ENCODE measurements at regions of chr3 and their contacts with region 1.

Region 1: DNA sequence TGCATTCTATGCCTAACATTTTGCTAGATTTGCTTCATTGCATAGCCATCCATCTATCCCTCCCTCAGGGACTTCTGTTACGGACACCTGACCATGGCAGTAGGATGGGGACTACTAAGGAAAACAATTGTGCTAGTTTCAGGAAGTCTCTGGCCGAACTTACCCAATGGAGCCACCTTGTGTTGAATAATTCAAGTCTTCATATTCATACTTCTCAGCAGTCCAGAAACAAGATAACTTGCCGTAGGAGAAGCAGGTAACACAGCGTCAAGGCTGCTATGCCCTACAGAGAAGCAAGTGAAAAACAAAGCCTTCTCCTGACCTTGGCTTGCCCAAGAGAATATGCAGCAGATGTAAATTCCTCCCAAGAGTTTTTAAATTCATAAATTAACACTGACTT is 685.3 kb downstream of the GRM7 start:
- DNase-seq: no peak
- H3K4me3 ChIP-seq: no peak overlapping the region
- H3K27ac ChIP-seq: no peak overlapping the region
- H3K4me1 ChIP-seq: no peaks in the 10 kb centered on the region
- H3K27me3 ChIP-seq: no peaks in the 10 kb centered on the region
- CTCF ChIP-seq: peak; percentile 55

Region 2: GRCh38 chr3:7285505-7285904 is 260.7 kb before region 1 on chr3:
- intact Hi-C with region 1: loop called (anchors 10 kb)
- DNase-seq: no peak
- H3K4me3 ChIP-seq: no peak overlapping the region
- H3K27ac ChIP-seq: no peak overlapping the region
- H3K4me1 ChIP-seq: no peaks in the 10 kb centered on the region
- H3K27me3 ChIP-seq: no peaks in the 10 kb centered on the region
- CTCF ChIP-seq: peak; percentile 45

Region 3: DNA sequence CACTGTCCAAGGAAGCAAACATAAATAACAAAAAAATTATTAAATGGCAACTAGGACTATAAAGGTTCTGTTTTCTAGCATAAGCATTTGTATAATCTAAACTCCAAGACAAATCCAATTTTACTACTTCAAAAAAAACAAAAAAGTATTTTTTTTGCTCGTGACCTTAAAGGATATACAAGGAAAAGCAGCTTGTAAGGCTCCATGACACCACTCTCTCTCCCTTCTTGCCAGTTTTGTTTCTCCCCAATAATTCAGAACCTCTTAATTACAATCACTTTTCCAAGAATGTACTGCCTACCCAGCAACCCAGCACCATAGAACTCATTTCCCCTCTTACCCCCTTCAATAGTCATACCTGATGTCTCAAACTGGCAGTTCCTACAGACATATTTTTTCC is 189.2 kb before region 1 on chr3:
- intact Hi-C with region 1: no loop called
- DNase-seq: no peak
- H3K4me3 ChIP-seq: no peak overlapping the region
- H3K27ac ChIP-seq: no peak overlapping the region
- H3K4me1 ChIP-seq: no peaks in the 10 kb centered on the region
- H3K27me3 ChIP-seq: no peaks in the 10 kb centered on the region
- CTCF ChIP-seq: no peak